Activated CD4-positive, alpha-beta T cell treated with anti-CD3 and anti-CD28 coated beads, Interleukin-2, amount 10 ng/mL, durations not matched to agents 7 days and 5 days (primary cell): ENCODE measurements at regions of chr7 and their contacts with region 1.

Region 1: GRCh38 chr7:130951303-130951975 is 217.4 kb upstream of the KLF14 start:
- DNase-seq: no peak
- H3K4me3 Mint-ChIP-seq: no peak overlapping the region
- H3K27ac Mint-ChIP-seq: no peak overlapping the region
- H3K4me1 Mint-ChIP-seq: peaks cover 58% of the 10 kb centered on the region
- H3K27me3 Mint-ChIP-seq: no peaks in the 10 kb centered on the region

Region 2: DNA sequence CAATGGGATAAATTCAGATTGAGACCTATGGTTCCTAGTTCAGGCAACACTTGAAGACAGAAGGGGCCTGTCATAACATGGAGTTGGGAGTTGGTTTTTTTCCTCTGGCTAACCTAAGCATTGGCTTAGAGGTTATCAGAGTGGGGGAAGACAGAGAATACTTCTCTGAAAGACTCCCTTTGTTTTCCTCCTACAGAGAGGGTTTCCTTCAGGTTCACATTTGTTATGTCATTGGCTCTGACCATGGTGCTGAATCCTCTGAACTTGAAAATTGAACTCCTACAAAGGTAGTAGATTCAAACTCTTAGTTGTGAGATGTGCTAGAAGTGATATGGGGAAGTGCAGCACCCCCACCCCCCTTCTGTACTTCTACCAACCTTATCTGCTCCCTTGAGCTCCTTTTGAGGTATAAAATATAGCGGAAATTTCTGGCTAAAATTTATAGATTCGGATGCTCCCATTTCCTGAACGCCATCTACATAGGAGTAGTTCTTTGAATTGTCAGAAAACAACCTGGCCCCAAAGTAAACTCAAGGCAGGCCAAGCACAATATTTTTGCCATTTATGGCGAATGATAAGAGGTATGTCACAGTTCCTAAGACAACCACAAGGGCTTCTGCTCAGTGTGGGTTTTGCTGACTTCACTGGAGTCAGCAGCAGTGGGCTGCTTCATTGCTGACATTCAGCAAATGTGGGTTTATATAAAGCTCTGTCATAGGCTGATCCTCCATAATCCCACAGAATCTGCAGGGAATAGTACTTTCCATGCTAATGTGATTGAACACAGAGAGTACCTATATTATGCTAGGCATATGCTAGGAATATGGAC is 85.8 kb before region 1 on chr7:
- CTCF ChIA-PET with region 1: no interaction called
- POLR2A ChIA-PET with region 1: no interaction called
- DNase-seq: peak; percentile 48
- H3K4me3 Mint-ChIP-seq: no peak overlapping the region
- H3K27ac Mint-ChIP-seq: no peak overlapping the region
- H3K4me1 Mint-ChIP-seq: no peaks in the 10 kb centered on the region
- H3K27me3 Mint-ChIP-seq: no peaks in the 10 kb centered on the region

Region 3: DNA sequence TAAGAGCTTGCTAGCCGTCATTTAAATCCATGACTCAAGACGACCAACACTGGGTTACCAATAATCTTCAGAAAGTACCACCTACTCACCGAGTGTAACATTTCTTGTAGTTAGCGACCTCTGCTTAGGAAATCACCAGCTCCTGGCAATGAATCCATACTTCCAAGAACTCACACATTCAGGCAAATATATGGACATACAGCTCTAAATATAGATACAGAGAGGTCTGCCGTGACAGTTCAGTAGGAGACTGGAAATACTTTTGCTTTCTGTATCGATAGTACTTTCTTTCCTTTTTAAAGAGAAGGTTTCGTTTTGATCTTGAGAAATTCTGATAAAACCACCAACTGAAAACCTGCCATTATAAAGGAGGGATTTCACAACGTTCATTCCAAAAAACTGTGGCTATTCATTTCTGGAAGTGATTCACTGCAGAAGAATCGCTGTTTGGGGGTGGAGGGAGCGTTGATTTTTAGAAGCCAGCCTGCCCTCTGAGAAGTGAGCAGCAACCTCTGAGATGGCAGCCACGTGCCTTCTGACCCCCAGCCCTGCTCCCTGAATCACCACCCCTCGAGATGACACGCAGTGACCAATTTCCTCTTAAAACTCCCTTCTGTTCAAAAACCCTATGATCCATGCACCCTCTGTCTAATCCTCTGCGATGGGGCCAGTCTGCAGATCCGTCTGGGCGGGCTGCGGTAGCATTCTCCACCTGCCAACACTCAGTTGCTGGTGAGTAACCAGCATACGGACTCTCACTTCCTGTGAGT is 38.4 kb before region 1 on chr7:
- CTCF ChIA-PET with region 1: interaction called, 6 read pairs
- POLR2A ChIA-PET with region 1: interaction called, 12 read pairs
- DNase-seq: peak; percentile 88
- H3K4me3 Mint-ChIP-seq: peak overlapping the region; percentile 82
- H3K27ac Mint-ChIP-seq: peak overlapping the region; percentile 94
- H3K4me1 Mint-ChIP-seq: peaks cover 85% of the 10 kb centered on the region
- H3K27me3 Mint-ChIP-seq: no peaks in the 10 kb centered on the region

Region 4: DNA sequence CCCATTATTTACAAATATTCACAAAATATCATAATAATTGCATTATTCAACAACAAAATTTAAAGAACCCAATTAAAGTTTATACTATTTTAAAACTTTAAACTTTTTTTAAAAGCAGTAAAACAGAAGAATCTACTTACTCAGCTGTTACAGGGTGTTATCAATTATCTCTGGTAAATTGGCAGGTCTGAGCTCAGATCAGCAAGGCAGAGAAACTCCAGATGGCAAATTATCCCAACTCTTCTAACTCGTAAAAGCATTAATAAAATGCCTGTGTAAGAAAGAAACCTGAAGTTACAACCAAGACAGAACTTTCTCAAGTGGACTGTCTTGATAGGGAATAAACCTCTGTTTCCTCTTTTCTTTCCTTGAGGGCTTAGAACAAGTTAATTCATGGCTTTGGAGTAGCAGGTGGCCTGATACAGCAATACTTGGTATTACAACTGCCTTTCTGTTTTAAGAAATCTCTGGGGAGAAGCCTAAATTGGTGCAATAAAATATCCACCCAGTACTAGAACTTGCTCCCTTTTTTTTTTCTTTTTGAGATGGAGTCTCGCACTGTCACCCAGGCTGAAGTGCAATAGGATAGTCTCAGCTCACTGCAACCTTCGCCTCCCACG is 101.0 kb after region 1 on chr7:
- CTCF ChIA-PET with region 1: no interaction called
- POLR2A ChIA-PET with region 1: no interaction called
- DNase-seq: no peak
- H3K4me3 Mint-ChIP-seq: no peak overlapping the region
- H3K27ac Mint-ChIP-seq: no peak overlapping the region
- H3K4me1 Mint-ChIP-seq: peaks cover 72% of the 10 kb centered on the region
- H3K27me3 Mint-ChIP-seq: no peaks in the 10 kb centered on the region